Heart right ventricle (tissue), 16 donors: ENCODE measurements at regions of chr1 and their contacts with region 1.

Region 1: GRCh38 chr1:235415008-235415904 is 48.0 kb downstream of the TBCE start:
- DNase-seq: peak; percentile 37 to 51
- ATAC-seq: peak; percentile 52 to 82 (median 78)
- H3K4me3 ChIP-seq: no peak overlapping the region
- H3K27ac ChIP-seq: no peak overlapping the region
- H3K4me1 ChIP-seq: peaks cover 0 to 12% (median 3%) of the 10 kb centered on the region in 9 donors
- H3K27me3 ChIP-seq: no peaks in the 10 kb centered on the region
- CTCF ChIP-seq: peak; percentile 50 to 83 (median 76)

Region 2: GRCh38 chr1:234486498-234487448 is 928.5 kb before region 1 on chr1:
- intact Hi-C with region 1: loop called in 2 of 10 experiments (anchors 10 kb)
- DNase-seq: peak in 1 of 2 donors; percentile 47
- ATAC-seq: peak; percentile 27 to 88 (median 76)
- H3K4me3 ChIP-seq: peak overlapping the region in 3 of 10 donors; percentile 4 to 18 (median 5)
- H3K27ac ChIP-seq: peak overlapping the region in 3 of 10 donors; percentile 1 to 33 (median 13)
- H3K4me1 ChIP-seq: peaks cover 3 to 17% (median 9%) of the 10 kb centered on the region in 9 donors
- H3K27me3 ChIP-seq: peaks cover 0 to 6% (median 0%) of the 10 kb centered on the region in 7 donors
- CTCF ChIP-seq: peak; percentile 37 to 85 (median 77)

Region 3: GRCh38 chr1:235100194-235100772 is 315.0 kb before region 1 on chr1:
- intact Hi-C with region 1: loop called in 7 of 10 experiments (anchors 2 to 10 kb)
- DNase-seq: peak in 1 of 2 donors; percentile 41
- ATAC-seq: peak in 7 of 8 donors; percentile 32 to 61 (median 43)
- H3K4me3 ChIP-seq: no peak overlapping the region
- H3K27ac ChIP-seq: peak overlapping the region in 2 of 10 donors; percentile 21 to 32
- H3K4me1 ChIP-seq: peaks cover 3 to 11% (median 6%) of the 10 kb centered on the region in 9 donors
- H3K27me3 ChIP-seq: no peaks in the 10 kb centered on the region
- CTCF ChIP-seq: no peak

Region 4: GRCh38 chr1:235253219-235253962 is 161.9 kb before region 1 on chr1:
- intact Hi-C with region 1: loop called (anchors 1 to 5 kb)
- DNase-seq: peak in 1 of 2 donors; percentile 64
- ATAC-seq: peak; percentile 78 to 96 (median 92)
- H3K4me3 ChIP-seq: no peak overlapping the region
- H3K27ac ChIP-seq: no peak overlapping the region
- H3K4me1 ChIP-seq: peaks cover 0 to 14% (median 0%) of the 10 kb centered on the region in 9 donors
- H3K27me3 ChIP-seq: no peaks in the 10 kb centered on the region
- CTCF ChIP-seq: peak; percentile 63 to 92 (median 89)

Region 5: GRCh38 chr1:235336903-235337302 is 78.4 kb before region 1 on chr1:
- intact Hi-C with region 1: loop called in 1 of 10 experiments (anchors 10 kb)
- DNase-seq: peak in 1 of 2 donors; percentile 18
- ATAC-seq: peak; percentile 65 to 98 (median 90)
- H3K4me3 ChIP-seq: peak overlapping the region in 1 of 10 donors; percentile 1
- H3K27ac ChIP-seq: peak overlapping the region in 4 of 10 donors; percentile 5 to 64 (median 26)
- H3K4me1 ChIP-seq: peaks cover 0 to 46% (median 30%) of the 10 kb centered on the region in 9 donors
- H3K27me3 ChIP-seq: no peaks in the 10 kb centered on the region
- CTCF ChIP-seq: no peak